RWPE1 (cell line): ENCODE measurements at regions of chr4 and their contacts with region 1.

Region 1: DNA sequence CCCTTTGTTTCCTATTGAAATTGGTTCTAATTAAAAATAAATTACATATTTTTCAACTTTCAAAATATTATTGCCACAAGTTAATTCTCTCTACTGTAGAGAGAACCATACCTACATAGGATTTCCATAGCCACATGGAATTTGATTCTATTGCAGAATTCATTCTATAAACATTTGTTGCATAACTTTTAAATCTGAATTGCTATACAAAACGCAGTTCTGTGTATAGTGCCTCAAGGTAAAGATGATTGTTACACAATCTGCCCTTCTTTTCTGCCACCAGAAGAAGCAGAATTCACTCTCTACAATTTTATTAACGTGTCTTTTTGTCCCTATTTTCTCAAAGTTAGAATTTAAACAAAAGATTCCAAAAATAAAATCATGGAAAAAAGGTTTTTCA is 673.4 kb downstream of the C4orf33 start:
- DNase-seq: no peak
- H3K27ac ChIP-seq: no peak overlapping the region
- CTCF ChIP-seq: no peak

Region 2: DNA sequence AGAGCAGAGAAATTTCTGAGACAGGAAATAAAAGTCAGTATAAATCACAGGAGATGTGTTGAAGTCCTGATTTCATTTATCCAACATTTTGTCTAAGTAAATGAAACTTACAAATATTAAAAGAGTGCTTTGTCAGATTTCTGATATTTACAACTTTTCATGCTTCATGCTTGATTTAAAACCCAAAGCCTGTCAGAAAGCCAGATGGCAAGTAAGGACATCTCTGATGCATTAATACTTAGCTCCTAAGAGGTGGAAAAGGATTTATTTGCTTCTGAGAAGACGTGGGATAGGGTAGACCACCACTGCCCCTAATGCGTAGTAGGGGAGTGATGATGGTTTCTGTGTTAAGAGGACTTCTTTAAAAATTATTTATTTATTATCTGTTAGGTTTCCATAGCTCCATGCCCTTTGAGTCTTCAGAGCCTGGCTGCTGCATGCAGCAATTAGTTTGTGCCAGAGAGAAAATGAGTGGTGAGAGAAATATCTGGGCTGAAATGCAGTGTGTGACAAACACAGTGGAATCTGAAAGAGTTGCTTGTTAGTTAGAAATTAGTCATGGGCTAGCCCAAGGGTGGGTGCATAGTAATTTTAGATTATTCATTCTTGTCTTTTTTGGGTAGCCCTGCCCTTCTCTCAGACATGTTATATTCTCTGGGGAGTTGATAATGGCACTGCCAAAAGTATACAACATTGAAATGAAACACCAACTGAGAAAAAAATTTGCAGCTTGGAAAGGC is 339.6 kb before region 1 on chr4:
- CTCF ChIA-PET with region 1: interaction called, 10 read pairs
- POLR2A ChIA-PET with region 1: no interaction called
- DNase-seq: peak; percentile 2
- H3K27ac ChIP-seq: no peak overlapping the region
- CTCF ChIP-seq: no peak